ENCODE measurements at regions of chr16 and their contacts with region 1.

Region 1: GRCh38 chr16:88957887-88958577 is 19.0 kb downstream of the CBFA2T3 start:
- DNase-seq: no peak
- H3K4me3 ChIP-seq: no peak overlapping the region
- H3K27ac ChIP-seq: no peak overlapping the region
- H3K4me1 ChIP-seq: no peaks in the 10 kb centered on the region
- H3K27me3 ChIP-seq: peaks cover 51% of the 10 kb centered on the region
- CTCF ChIP-seq: no peak
- EP300 ChIP-seq: no peak
- RAD21 ChIP-seq: no peak

Region 2: GRCh38 chr16:88941913-88942909 is 15.8 kb before region 1 on chr16:
- CTCF ChIA-PET with region 1: interaction called, 11 read pairs
- POLR2A ChIA-PET with region 1: no interaction called
- DNase-seq: peak; percentile 95
- H3K4me3 ChIP-seq: no peak overlapping the region
- H3K27ac ChIP-seq: no peak overlapping the region
- H3K4me1 ChIP-seq: peaks cover 0 to 21% of the 10 kb centered on the region in 2 experiments; a peak in 1 of 4 replicates
- H3K27me3 ChIP-seq: peaks cover 83% of the 10 kb centered on the region
- CTCF ChIP-seq: peak; percentile 61
- EP300 ChIP-seq: no peak
- RAD21 ChIP-seq: peak; percentile 69

Region 3: GRCh38 chr16:89187155-89188041 is 229.4 kb after region 1 on chr16:
- CTCF ChIA-PET with region 1: no interaction called
- POLR2A ChIA-PET with region 1: no interaction called
- DNase-seq: no peak
- H3K4me3 ChIP-seq: no peak overlapping the region
- H3K27ac ChIP-seq: no peak overlapping the region
- H3K4me1 ChIP-seq: peaks cover 0 to 12% of the 10 kb centered on the region in 2 experiments; a peak in 1 of 4 replicates
- H3K27me3 ChIP-seq: peaks cover 37% of the 10 kb centered on the region
- CTCF ChIP-seq: no peak
- EP300 ChIP-seq: no peak
- RAD21 ChIP-seq: no peak

Measured in SK-N-SH (cell line).